CD14-positive monocyte (primary cell): ENCODE measurements at regions of chr14 and their contacts with region 1.

Region 1: GRCh38 chr14:89445273-89445973 is 28.4 kb upstream of the FOXN3 start:
- DNase-seq: peak; percentile 73 to 90 (median 81)
- H3K4me3 ChIP-seq: no peak overlapping the region
- H3K4me3 Mint-ChIP-seq: no peak overlapping the region
- H3K27ac ChIP-seq: peak overlapping the region; percentile 82 to 90
- H3K27ac Mint-ChIP-seq: peak overlapping the region; percentile 93 to 98 (median 98)
- H3K4me1 ChIP-seq: peaks cover 66 to 72% of the 10 kb centered on the region in 2 donors
- H3K4me1 Mint-ChIP-seq: peaks cover 70% of the 10 kb centered on the region
- H3K27me3 ChIP-seq: no peaks in the 10 kb centered on the region
- H3K27me3 Mint-ChIP-seq: peaks cover 0 to 3% (median 0%) of the 10 kb centered on the region in 3 donors
- CTCF ChIP-seq: no peak

Region 2: GRCh38 chr14:89351516-89352404 is 93.7 kb before region 1 on chr14:
- intact Hi-C with region 1: no loop called
- DNase-seq: no peak
- H3K4me3 ChIP-seq: peak overlapping the region in 2 of 3 experiments; percentile 5 to 18
- H3K4me3 Mint-ChIP-seq: peak overlapping the region; percentile 53 to 78
- H3K27ac ChIP-seq: peak overlapping the region in 1 of 2 donors; percentile 70
- H3K27ac Mint-ChIP-seq: peak overlapping the region; percentile 58 to 92 (median 83)
- H3K4me1 ChIP-seq: peaks cover 28 to 36% of the 10 kb centered on the region in 2 donors
- H3K4me1 Mint-ChIP-seq: peaks cover 36% of the 10 kb centered on the region
- H3K27me3 ChIP-seq: no peaks in the 10 kb centered on the region
- H3K27me3 Mint-ChIP-seq: no peaks in the 10 kb centered on the region
- CTCF ChIP-seq: no peak

Region 3: DNA sequence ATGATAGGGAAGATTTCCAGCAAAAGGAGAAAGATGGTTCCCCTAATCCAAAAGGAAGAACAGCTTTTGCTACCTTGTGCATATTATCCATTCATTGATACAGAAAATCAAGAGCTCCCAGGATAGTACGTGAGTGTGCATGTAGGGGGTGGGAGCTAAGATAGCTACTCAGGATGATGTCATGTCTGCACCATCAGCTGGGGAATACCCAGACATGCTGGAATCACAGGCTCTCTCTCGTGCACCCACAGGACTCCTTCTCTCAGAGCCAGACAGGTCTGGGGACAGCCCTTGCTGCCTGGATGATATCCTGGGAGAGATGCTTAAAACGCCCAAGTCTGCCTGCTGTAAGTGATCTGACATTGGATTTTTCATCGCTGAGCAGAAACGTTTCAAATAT is 67.3 kb before region 1 on chr14:
- intact Hi-C with region 1: no loop called
- DNase-seq: peak in 1 of 3 donors; percentile 38
- H3K4me3 ChIP-seq: no peak overlapping the region
- H3K4me3 Mint-ChIP-seq: no peak overlapping the region
- H3K27ac ChIP-seq: peak overlapping the region in 1 of 2 donors; percentile 41
- H3K27ac Mint-ChIP-seq: peak overlapping the region in 2 of 7 donors; percentile 25 to 38
- H3K4me1 ChIP-seq: peaks cover 5 to 11% of the 10 kb centered on the region in 2 donors
- H3K4me1 Mint-ChIP-seq: peaks cover 19% of the 10 kb centered on the region
- H3K27me3 ChIP-seq: no peaks in the 10 kb centered on the region
- H3K27me3 Mint-ChIP-seq: no peaks in the 10 kb centered on the region
- CTCF ChIP-seq: no peak

Region 4: DNA sequence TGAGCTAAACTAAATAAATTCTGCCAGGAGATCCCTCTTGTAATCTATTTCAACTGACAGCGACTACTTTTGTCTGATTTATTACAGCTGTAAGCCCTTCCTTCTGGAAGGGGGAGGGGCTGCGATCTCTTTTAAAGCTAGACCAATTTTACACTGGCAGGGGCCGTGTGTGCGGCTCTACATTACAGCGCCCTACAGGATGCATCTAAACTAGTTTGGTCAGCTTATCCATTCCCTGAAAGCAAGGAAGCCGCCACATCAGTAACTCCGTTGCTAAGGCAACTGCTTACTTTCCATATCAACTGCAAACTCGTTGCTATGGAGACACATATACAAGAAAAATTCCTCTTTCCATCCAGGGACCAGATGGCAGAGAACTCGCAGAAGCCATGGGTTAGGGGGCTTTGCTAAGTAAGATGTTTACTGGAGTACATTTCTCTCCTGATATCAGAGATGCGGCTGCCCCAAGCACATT is 45.8 kb before region 1 on chr14:
- intact Hi-C with region 1: no loop called
- DNase-seq: peak in 1 of 3 donors; percentile 34
- H3K4me3 ChIP-seq: no peak overlapping the region
- H3K4me3 Mint-ChIP-seq: no peak overlapping the region
- H3K27ac ChIP-seq: peak overlapping the region in 1 of 2 donors; percentile 60
- H3K27ac Mint-ChIP-seq: peak overlapping the region in 3 of 7 donors; percentile 38 to 68 (median 59)
- H3K4me1 ChIP-seq: peaks cover 16 to 17% of the 10 kb centered on the region in 2 donors
- H3K4me1 Mint-ChIP-seq: peaks cover 55% of the 10 kb centered on the region
- H3K27me3 ChIP-seq: no peaks in the 10 kb centered on the region
- H3K27me3 Mint-ChIP-seq: no peaks in the 10 kb centered on the region
- CTCF ChIP-seq: no peak

Region 5: GRCh38 chr14:89479802-89480201 is 34.4 kb after region 1 on chr14:
- intact Hi-C with region 1: loop called (anchors 5 kb)
- DNase-seq: peak; percentile 86 to 98 (median 97)
- H3K4me3 ChIP-seq: no peak overlapping the region
- H3K4me3 Mint-ChIP-seq: no peak overlapping the region
- H3K27ac ChIP-seq: peak overlapping the region; percentile 85 to 87
- H3K27ac Mint-ChIP-seq: peak overlapping the region; percentile 93 to 99 (median 97)
- H3K4me1 ChIP-seq: peaks cover 54 to 69% of the 10 kb centered on the region in 2 donors
- H3K4me1 Mint-ChIP-seq: peaks cover 55% of the 10 kb centered on the region
- H3K27me3 ChIP-seq: no peaks in the 10 kb centered on the region
- H3K27me3 Mint-ChIP-seq: peaks cover 0 to 2% (median 0%) of the 10 kb centered on the region in 3 donors
- CTCF ChIP-seq: no peak

Region 6: GRCh38 chr14:89489761-89490437 is 44.5 kb after region 1 on chr14:
- intact Hi-C with region 1: loop called in 1 of 2 experiments (anchors 5 kb)
- DNase-seq: no peak
- H3K4me3 ChIP-seq: no peak overlapping the region
- H3K4me3 Mint-ChIP-seq: no peak overlapping the region
- H3K27ac ChIP-seq: no peak overlapping the region
- H3K27ac Mint-ChIP-seq: peak overlapping the region in 4 of 7 donors; percentile 12 to 65 (median 45)
- H3K4me1 ChIP-seq: peaks cover 50 to 55% of the 10 kb centered on the region in 2 donors
- H3K4me1 Mint-ChIP-seq: peaks cover 51% of the 10 kb centered on the region
- H3K27me3 ChIP-seq: no peaks in the 10 kb centered on the region
- H3K27me3 Mint-ChIP-seq: peaks cover 0 to 4% (median 0%) of the 10 kb centered on the region in 3 donors
- CTCF ChIP-seq: no peak

Region 7: GRCh38 chr14:89531661-89532335 is 86.4 kb after region 1 on chr14:
- intact Hi-C with region 1: no loop called
- DNase-seq: no peak
- H3K4me3 ChIP-seq: no peak overlapping the region
- H3K4me3 Mint-ChIP-seq: no peak overlapping the region
- H3K27ac ChIP-seq: no peak overlapping the region
- H3K27ac Mint-ChIP-seq: peak overlapping the region in 3 of 7 donors; percentile 28 to 50 (median 36)
- H3K4me1 ChIP-seq: no peaks in the 10 kb centered on the region
- H3K4me1 Mint-ChIP-seq: peaks cover 8% of the 10 kb centered on the region
- H3K27me3 ChIP-seq: no peaks in the 10 kb centered on the region
- H3K27me3 Mint-ChIP-seq: no peaks in the 10 kb centered on the region
- CTCF ChIP-seq: no peak